HEK293 (cell line): ENCODE measurements at regions of chr10 and their contacts with region 1.

Region 1: DNA sequence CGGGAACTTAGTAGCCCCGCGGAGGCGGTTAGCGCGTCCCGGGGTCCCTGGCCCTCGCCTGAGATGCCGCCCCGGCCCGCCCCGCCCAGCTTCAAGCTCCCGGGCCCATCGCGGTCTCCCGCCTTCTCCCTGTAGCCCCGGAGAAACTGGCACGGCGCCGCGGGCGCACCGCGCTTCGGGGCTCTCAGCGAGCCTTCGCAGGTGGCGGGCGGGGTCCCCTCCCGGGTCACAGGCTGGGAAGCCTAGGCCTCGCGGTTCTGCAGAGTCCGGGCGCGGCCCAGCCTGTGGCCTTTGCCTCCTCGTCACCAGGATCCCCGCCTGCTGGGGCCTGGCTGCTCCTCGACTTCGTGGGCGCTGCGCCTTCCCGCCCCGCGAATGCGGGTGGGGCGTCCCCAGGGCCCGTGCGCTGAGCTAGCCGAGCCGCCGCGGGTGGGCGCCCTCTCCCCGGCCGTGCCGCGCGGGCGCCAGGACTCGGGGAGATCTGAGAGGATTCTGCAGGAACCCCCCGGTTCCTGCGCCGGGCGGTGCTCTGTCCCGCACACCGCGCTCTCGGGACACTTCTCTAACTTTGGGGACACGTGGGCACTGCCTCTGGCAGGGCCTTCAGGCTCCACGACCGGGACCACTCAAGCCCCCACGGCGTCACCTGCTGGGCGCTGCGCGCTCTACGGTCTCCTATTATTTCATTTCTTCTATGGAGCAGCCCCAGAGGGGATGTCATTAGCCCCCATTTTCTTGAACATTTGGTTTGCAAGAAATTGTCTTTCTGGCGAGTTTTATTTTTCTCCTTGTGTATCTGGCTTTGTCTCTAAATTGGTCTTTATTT is 682 bp upstream of the RGS10 start:
- H3K4me3 ChIP-seq: peak overlapping the region; percentile 63
- H3K27ac ChIP-seq: peak overlapping the region; percentile 82; the same call in 1 of the 2 replicates
- H3K4me1 ChIP-seq: peaks cover 8% of the 10 kb centered on the region
- CTCF ChIP-seq: peak; percentile 83

Region 2: GRCh38 chr10:119521443-119522204 is 21.6 kb before region 1 on chr10:
- CTCF ChIA-PET with region 1: interaction called, 5 read pairs
- POLR2A ChIA-PET with region 1: interaction called, 12 read pairs
- H3K4me3 ChIP-seq: no peak overlapping the region
- H3K27ac ChIP-seq: no peak overlapping the region
- H3K4me1 ChIP-seq: no peaks in the 10 kb centered on the region
- CTCF ChIP-seq: no peak